Posterior vena cava (tissue), 2 donors: ENCODE measurements at regions of chr4 and their contacts with region 1.

Region 1: GRCh38 chr4:32318926-32319325 is 1598.8 kb downstream of the PCDH7 start:
- DNase-seq: no peak

Region 2: GRCh38 chr4:32342054-32342453 is 23.1 kb after region 1 on chr4:
- intact Hi-C with region 1: loop called in 1 of 2 experiments (anchors 1 kb)
- DNase-seq: no peak

Region 3: DNA sequence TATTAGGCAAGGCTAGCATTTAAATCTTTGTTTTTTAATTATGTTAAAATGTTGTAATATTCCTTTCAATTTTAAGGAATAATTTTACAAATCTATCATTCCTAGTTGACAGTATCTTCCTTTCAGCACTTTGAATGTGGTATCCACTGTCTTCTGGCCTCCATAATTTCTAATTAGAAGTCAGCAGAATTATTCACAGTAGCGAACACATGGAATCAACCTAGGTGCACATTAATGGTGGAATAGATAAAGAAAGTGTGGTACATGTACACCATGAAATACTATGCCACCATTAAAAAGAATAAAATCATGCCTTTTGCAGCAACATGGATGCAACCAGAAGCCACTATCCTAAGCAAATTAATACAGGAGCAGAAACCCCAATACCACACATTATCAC is 289.1 kb after region 1 on chr4:
- intact Hi-C with region 1: no loop called
- DNase-seq: no peak